ENCODE measurements at regions of chr5 and their contacts with region 1.

Region 1: DNA sequence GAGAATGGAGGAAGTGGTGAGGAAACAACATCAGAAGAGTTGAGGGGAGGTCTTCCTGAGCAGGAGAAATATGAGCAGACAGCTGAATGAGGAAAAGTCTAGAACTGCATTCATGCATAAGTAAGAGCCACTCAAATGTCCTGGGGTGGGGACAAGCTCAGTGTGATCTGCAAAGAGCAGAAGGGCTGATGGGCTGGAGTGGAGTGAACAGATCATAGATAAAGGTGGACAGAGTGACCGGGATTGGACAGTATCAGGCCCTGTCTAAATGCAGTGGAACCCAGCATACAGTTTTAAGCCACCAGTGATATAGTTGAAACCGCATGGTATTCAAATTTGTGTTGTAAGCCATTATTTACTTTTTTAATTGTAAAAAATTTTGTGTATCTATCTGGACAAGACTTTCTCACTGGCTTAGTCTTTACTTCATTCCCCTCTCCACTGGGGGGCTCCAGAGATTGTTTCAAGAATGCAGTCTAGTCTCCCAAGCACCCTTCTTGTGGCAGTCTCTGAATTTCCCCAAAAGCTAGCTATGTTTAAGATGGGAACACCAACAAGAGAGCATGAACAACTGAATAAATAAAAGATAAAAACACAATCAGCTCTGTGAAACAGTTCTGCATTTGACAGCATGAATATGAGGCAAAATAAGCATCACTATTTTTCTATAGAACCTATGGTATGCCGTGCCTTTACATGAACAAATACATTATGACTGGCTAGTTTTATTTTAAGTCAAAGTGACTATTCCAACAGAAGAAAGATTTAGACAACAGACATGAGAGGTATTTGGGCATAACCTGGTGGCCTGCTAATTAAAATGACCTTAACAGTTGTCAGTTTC is 10.7 kb upstream of the STK32A start:
- DNase-seq: peak; percentile 8
- ATAC-seq: peak; percentile 69
- H3K4me3 ChIP-seq: no peak overlapping the region
- H3K27ac ChIP-seq: no peak overlapping the region
- H3K4me1 ChIP-seq: no peaks in the 10 kb centered on the region
- H3K27me3 ChIP-seq: no peaks in the 10 kb centered on the region
- CTCF ChIP-seq: peak; percentile 43
- EP300 ChIP-seq: no peak
- POLR2A ChIP-seq: no peak
- RAD21 ChIP-seq: no peak

Region 2: DNA sequence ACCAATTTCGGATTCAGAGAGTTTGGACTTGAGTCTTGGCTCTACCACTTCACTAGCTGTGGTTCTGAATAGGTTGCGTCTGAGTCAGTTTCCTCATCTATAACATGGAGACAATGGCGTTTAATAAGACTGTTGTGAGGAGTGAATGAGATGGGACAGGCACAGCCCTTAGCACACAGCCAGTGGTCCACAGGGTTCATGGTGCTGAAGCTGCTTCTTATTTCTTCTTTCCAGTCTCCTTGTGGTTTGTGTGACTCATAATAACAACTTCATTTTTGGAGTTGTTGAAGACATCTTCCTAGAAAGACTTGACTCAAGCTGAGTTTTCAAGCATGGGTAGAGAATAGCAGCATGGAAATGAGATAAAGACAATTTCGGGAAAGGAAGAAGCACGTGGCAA is 173.0 kb before region 1 on chr5:
- CTCF ChIA-PET with region 1: no interaction called
- POLR2A ChIA-PET with region 1: no interaction called
- in situ Hi-C with region 1: no loop called
- intact Hi-C with region 1: no loop called
- DNase-seq: no peak
- ATAC-seq: no peak
- H3K4me3 ChIP-seq: no peak overlapping the region
- H3K27ac ChIP-seq: no peak overlapping the region
- H3K4me1 ChIP-seq: no peaks in the 10 kb centered on the region
- H3K27me3 ChIP-seq: no peaks in the 10 kb centered on the region
- CTCF ChIP-seq: no peak
- EP300 ChIP-seq: no peak
- POLR2A ChIP-seq: no peak
- RAD21 ChIP-seq: no peak

Region 3: DNA sequence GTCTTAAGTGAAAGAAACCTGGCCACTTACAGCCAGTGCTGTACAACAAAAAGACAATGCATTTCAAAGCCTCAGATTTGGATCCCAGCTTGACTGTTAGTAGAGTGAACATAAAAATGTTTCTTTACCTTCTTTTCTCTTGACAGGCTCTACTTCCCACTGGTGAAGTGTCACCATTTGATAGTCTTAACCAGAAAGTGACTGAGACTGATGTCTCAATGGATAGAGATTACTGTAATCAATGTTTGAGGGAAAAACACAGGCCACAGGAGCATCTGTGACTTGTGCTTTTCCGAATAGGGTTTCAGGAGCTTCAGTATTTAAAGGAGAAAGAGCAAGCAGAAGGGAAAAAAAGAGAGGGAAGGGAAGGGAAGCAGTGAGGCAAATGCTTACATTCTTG is 31.0 kb before region 1 on chr5:
- CTCF ChIA-PET with region 1: no interaction called
- POLR2A ChIA-PET with region 1: no interaction called
- in situ Hi-C with region 1: no loop called
- intact Hi-C with region 1: no loop called
- DNase-seq: no peak
- ATAC-seq: no peak
- H3K4me3 ChIP-seq: no peak overlapping the region
- H3K27ac ChIP-seq: no peak overlapping the region
- H3K4me1 ChIP-seq: no peaks in the 10 kb centered on the region
- H3K27me3 ChIP-seq: no peaks in the 10 kb centered on the region
- CTCF ChIP-seq: no peak
- EP300 ChIP-seq: no peak
- POLR2A ChIP-seq: no peak
- RAD21 ChIP-seq: no peak

Region 4: DNA sequence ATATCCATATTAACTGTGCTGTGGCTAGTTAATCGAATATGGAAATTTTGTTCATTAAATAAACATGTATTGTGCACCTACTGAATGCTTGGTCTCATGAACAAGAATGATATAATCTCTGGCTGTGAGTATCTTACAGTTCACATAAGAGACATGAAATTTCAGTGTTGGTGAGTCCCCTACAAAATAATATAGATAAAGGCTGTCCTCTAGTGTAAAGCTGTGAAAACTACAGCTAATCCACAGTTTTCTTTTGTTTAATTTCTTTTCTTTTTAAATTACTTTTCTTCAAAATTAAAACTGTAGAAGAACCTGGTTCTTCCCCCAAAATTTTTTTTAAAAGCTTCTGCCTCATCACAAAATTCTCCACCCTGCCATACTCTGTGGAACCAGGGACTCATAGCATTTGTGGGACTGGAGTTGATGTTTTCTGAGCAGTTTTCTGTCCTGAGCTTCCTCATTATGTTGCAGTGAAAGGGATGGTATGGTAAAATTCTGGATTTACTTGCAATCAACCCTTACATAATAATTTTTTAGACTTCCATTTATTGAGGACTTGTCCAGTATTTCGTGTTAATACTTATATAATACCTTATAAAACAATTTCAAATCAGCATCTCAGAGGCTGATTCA is 145.7 kb after region 1 on chr5:
- CTCF ChIA-PET with region 1: no interaction called
- POLR2A ChIA-PET with region 1: no interaction called
- in situ Hi-C with region 1: no loop called
- intact Hi-C with region 1: loop called (anchors 1 kb)
- DNase-seq: no peak
- ATAC-seq: no peak
- H3K4me3 ChIP-seq: no peak overlapping the region
- H3K27ac ChIP-seq: no peak overlapping the region
- H3K4me1 ChIP-seq: no peaks in the 10 kb centered on the region
- H3K27me3 ChIP-seq: no peaks in the 10 kb centered on the region
- CTCF ChIP-seq: no peak
- EP300 ChIP-seq: no peak
- POLR2A ChIP-seq: no peak
- RAD21 ChIP-seq: no peak

Region 5: DNA sequence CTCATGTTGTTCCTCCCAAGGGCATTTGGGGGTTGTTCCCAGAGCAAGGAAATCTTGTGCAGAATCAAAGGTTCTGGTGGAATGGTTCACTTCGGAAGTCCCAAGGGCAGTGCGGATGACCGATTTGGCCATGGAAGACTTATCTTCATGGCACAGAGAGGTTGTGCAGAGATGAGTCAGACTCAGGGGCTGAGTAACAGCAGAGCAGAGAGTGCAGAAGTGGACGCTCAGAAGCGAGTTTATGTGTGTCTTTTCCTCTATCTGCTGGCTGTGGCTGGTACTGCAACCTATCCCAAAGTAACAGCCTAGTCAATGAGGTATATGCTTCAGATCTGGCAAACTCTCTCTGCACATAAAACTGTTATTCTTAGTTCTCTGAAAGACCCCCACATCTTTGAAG is 167.6 kb after region 1 on chr5:
- CTCF ChIA-PET with region 1: no interaction called
- POLR2A ChIA-PET with region 1: no interaction called
- in situ Hi-C with region 1: no loop called
- intact Hi-C with region 1: loop called (anchors 10 kb)
- DNase-seq: peak; percentile 25
- ATAC-seq: peak; percentile 98
- H3K4me3 ChIP-seq: no peak overlapping the region
- H3K27ac ChIP-seq: no peak overlapping the region
- H3K4me1 ChIP-seq: no peaks in the 10 kb centered on the region
- H3K27me3 ChIP-seq: 0 out of 5 replicates have a peak, but pooled peaks cover 0 to 4% of the 10 kb centered on the region in 2 experiments
- CTCF ChIP-seq: peak; percentile 34
- EP300 ChIP-seq: no peak
- POLR2A ChIP-seq: no peak
- RAD21 ChIP-seq: no peak

Measured in HepG2 (cell line).